ENCODE measurements at regions of chr18 and their contacts with region 1.

Region 1: GRCh38 chr18:50967714-50968661 is at the start of gene ELAC1:
- DNase-seq: peak; percentile 54 to 73
- H3K4me3 ChIP-seq: peak within 1 kb of the TSS; percentile 67
- H3K4me3 Mint-ChIP-seq: peak within 1 kb of the TSS; percentile 72
- H3K27ac Mint-ChIP-seq: no peak within 1 kb of the TSS
- H3K4me1 ChIP-seq: no peaks in the 10 kb centered on the region
- H3K4me1 Mint-ChIP-seq: peaks cover 8% of the 10 kb centered on the region
- H3K27me3 ChIP-seq: no peaks in the 10 kb centered on the region
- H3K27me3 Mint-ChIP-seq: no peaks in the 10 kb centered on the region
- CTCF ChIP-seq: no peak
- total RNA-seq, gene ELAC1: 4.8 and 5.3 TPM in 2 replicates

Region 2: GRCh38 chr18:51006061-51006818 is 38.3 kb after region 1 on chr18:
- CTCF ChIA-PET with region 1: no interaction called
- POLR2A ChIA-PET with region 1: no interaction called
- intact Hi-C with region 1: no loop called
- DNase-seq: peak; percentile 28 to 42
- H3K4me3 ChIP-seq: no peak overlapping the region
- H3K4me3 Mint-ChIP-seq: no peak overlapping the region
- H3K27ac Mint-ChIP-seq: no peak overlapping the region
- H3K4me1 ChIP-seq: peaks cover 17% of the 10 kb centered on the region
- H3K4me1 Mint-ChIP-seq: peaks cover 19% of the 10 kb centered on the region
- H3K27me3 ChIP-seq: no peaks in the 10 kb centered on the region
- H3K27me3 Mint-ChIP-seq: no peaks in the 10 kb centered on the region
- CTCF ChIP-seq: no peak

Region 3: GRCh38 chr18:51029694-51030536 is 61.9 kb after region 1 on chr18 and contains the start of gene SMAD4:
- CTCF ChIA-PET with region 1: no interaction called
- POLR2A ChIA-PET with region 1: no interaction called
- intact Hi-C with region 1: loop called (anchors 5 kb)
- DNase-seq: peak; percentile 93 to 94
- H3K4me3 ChIP-seq: peak within 1 kb of the TSS; percentile 70
- H3K4me3 Mint-ChIP-seq: peak within 1 kb of the TSS; percentile 94
- H3K27ac Mint-ChIP-seq: peak within 1 kb of the TSS; percentile 94
- H3K4me1 ChIP-seq: no peaks in the 10 kb centered on the region
- H3K4me1 Mint-ChIP-seq: peaks cover 7% of the 10 kb centered on the region
- H3K27me3 ChIP-seq: no peaks in the 10 kb centered on the region
- H3K27me3 Mint-ChIP-seq: no peaks in the 10 kb centered on the region
- CTCF ChIP-seq: no peak
- total RNA-seq, gene SMAD4: 48.5 and 48.8 TPM in 2 replicates

Region 4: GRCh38 chr18:51092117-51092516 is 124.1 kb after region 1 on chr18:
- CTCF ChIA-PET with region 1: no interaction called
- POLR2A ChIA-PET with region 1: no interaction called
- intact Hi-C with region 1: no loop called
- DNase-seq: no peak
- H3K4me3 ChIP-seq: no peak overlapping the region
- H3K4me3 Mint-ChIP-seq: no peak overlapping the region
- H3K27ac Mint-ChIP-seq: no peak overlapping the region
- H3K4me1 ChIP-seq: no peaks in the 10 kb centered on the region
- H3K4me1 Mint-ChIP-seq: no peaks in the 10 kb centered on the region
- H3K27me3 ChIP-seq: no peaks in the 10 kb centered on the region
- H3K27me3 Mint-ChIP-seq: no peaks in the 10 kb centered on the region
- CTCF ChIP-seq: no peak

Measured in Caco-2 (cell line).